CD8-positive, alpha-beta T cell (primary cell): ENCODE measurements at regions of chr20 and their contacts with region 1.

Region 1: GRCh38 chr20:63980806-63981728 is at the start of gene PRPF6:
- DNase-seq: peak; percentile 88 to 98 (median 95)
- ATAC-seq: peak; percentile 60
- H3K4me3 ChIP-seq: peak within 1 kb of the TSS; percentile 67 to 76
- H3K4me3 Mint-ChIP-seq: peak within 1 kb of the TSS; percentile 91
- H3K27ac ChIP-seq: peak within 1 kb of the TSS; percentile 85 to 91
- H3K27ac Mint-ChIP-seq: peak within 1 kb of the TSS; percentile 95
- H3K4me1 ChIP-seq: peaks cover 52% of the 10 kb centered on the region
- H3K4me1 Mint-ChIP-seq: peaks cover 66% of the 10 kb centered on the region
- H3K27me3 ChIP-seq: no peaks in the 10 kb centered on the region
- H3K27me3 Mint-ChIP-seq: no peaks in the 10 kb centered on the region
- CTCF ChIP-seq: peak; percentile 78
- total RNA-seq, gene PRPF6: 51.6 to 51.9 TPM

Region 2: DNA sequence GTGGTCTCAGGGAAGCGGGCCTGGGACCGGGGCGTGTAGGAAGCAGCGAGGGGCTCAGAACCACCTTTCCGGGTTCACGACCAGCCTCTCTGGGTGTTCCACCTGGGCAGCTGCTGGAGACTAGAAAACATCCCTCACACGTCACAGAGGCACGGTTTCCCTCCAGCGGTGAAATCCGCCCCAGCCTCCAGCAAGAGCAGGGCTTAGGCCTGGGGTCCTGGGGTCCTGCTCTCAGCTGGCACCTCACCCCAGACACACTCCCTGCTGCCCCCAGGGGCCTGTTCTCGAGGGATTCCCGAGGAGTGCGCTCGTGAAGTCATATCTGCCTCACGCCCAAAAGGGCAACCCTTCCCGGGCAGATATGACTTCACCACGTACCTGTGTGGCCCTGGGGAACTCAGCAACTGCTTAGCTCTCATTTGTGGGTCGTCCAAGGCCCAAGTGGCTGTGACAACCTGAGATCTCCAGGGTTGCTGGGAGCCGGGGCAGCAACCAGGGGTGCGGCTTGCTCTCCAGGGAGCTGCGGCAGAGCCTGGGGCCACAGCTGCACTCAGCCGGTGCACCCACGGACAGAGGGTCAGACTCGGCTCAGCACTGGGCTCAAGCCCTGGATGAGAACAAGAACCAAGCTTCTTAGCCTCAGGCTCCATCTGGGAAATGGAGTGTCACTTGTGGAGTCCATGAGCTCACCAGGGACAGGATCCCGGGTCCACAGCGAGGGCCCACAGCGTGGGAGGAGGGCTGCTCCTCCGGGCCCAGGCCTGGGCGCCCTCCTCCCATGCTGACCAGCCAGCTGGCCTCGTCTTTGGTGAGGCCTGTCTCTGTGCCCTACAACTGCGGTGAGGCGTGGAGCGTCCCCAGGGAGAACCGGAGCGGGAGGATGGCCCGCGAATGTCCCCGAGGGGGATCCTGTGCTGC is 426.4 kb before region 1 on chr20:
- CTCF ChIA-PET with region 1: no interaction called
- POLR2A ChIA-PET with region 1: no interaction called
- intact Hi-C with region 1: no loop called
- DNase-seq: peak in 2 of 9 experiments; percentile 37 to 57
- ATAC-seq: no peak
- H3K4me3 ChIP-seq: peak overlapping the region; percentile 51 to 55
- H3K4me3 Mint-ChIP-seq: peak overlapping the region; percentile 80
- H3K27ac ChIP-seq: no peak overlapping the region
- H3K27ac Mint-ChIP-seq: peak overlapping the region; percentile 84
- H3K4me1 ChIP-seq: peaks cover 15% of the 10 kb centered on the region
- H3K4me1 Mint-ChIP-seq: peaks cover 17% of the 10 kb centered on the region
- H3K27me3 ChIP-seq: no peaks in the 10 kb centered on the region
- H3K27me3 Mint-ChIP-seq: no peaks in the 10 kb centered on the region
- CTCF ChIP-seq: no peak

Region 3: DNA sequence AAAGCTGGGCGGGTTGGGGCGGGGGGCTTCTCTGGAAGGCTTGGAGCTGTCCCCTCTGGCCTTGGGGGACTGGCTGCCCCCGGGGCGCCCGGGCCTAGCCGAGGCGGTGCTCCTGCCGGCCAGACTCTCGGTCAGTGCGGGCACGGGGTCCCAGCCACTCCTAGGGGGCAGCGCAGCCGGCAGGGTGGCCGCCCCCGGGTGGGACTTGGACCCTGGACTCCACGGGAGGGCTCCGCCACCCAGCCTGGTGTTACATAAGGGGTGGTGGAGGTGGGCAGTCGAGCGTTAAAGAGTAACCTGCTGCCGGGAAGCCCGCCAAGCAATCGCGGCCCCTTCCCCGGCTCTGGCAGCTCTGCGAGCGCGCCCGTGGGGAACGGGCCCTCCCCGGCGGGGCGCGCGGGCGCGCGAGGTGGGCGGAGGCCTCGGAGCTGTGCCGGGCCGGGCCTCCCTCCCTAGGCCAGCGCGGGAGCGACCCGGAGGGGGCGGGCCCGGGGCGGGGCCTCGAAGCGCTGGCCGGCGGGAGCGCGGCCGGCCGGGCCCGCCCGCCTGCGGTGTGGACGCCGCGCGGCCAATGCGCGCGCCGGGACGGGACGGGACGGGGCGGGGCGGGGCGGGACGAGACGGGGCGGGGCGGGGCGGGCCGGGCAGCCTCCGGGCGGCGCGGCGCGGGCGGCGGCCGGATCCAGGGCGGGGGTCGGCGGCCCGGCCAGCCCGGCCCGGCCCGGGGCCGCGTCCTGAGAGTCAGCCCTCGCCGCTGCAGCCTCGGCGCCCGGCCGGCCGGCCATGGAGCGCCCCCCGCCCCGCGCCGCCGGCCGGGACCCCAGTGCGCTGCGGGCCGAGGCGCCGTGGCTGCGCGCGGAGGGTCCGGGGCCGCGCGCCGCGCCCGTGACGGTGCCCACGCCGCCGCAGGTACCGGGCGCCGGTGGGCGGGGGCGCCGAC is 241.7 kb before region 1 on chr20 and contains the start of gene SLC2A4RG:
- CTCF ChIA-PET with region 1: interaction called, 3 read pairs
- POLR2A ChIA-PET with region 1: interaction called, 4 read pairs
- intact Hi-C with region 1: loop called in 1 of 2 experiments (anchors 2 kb)
- DNase-seq: peak; percentile 37 to 88 (median 66)
- ATAC-seq: peak; percentile 17
- H3K4me3 ChIP-seq: peak within 1 kb of the TSS; percentile 80 to 94
- H3K4me3 Mint-ChIP-seq: peak within 1 kb of the TSS; percentile 92
- H3K27ac ChIP-seq: peak within 1 kb of the TSS; percentile 40 to 48
- H3K27ac Mint-ChIP-seq: no peak within 1 kb of the TSS
- H3K4me1 ChIP-seq: peaks cover 41% of the 10 kb centered on the region
- H3K4me1 Mint-ChIP-seq: peaks cover 16% of the 10 kb centered on the region
- H3K27me3 ChIP-seq: no peaks in the 10 kb centered on the region
- H3K27me3 Mint-ChIP-seq: no peaks in the 10 kb centered on the region
- CTCF ChIP-seq: no peak
- total RNA-seq, gene SLC2A4RG: 79.3 to 90.0 TPM

Region 4: DNA sequence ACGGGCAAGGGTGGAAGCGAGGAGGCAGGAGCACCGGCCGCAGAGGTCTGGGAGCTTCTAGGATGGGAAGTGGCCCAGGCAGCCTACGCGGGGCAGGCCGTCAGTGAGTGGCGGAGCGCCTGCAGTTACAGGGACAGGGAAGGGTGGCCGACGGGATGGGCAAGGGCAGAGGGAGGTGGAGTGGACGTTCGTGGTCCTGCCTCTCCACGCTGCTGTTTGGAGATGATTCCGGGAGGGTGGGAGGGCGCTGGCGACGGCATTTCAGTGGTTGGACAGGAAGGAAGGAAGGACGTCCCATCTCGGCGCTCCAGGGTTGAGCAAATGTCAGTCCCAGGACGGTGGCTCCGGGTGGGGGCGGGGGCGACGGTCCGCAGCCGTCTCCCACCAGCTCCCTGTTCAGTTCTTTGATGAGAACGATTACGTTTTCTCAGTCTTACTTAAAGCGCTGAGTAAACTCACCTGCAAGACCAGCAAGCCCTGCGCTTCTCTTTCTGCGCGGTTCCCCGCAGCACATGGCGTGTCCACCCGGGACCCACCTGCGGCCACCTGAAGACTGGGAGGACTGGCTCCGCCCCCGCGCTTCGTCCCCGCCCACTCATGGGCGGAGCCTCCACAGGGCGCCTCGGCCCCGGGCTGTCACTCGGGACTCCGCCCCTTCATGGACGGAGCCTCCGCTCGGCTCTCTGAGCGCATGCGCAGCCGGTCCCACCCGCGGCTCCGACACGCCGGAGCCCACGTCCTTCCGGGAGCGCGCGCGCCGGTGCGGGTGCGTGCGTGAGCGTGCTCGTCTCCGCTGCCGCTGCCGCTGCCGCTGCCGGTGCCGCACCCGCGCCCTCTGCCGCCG is 86.5 kb before region 1 on chr20 and contains the start of gene DNAJC5:
- CTCF ChIA-PET with region 1: interaction called, 4 read pairs
- POLR2A ChIA-PET with region 1: no interaction called
- intact Hi-C with region 1: loop called in 1 of 2 experiments (anchors 5 kb)
- DNase-seq: peak; percentile 93 to 99 (median 97)
- ATAC-seq: peak; percentile 92
- H3K4me3 ChIP-seq: peak within 1 kb of the TSS; percentile 46 to 66
- H3K4me3 Mint-ChIP-seq: peak within 1 kb of the TSS; percentile 95
- H3K27ac ChIP-seq: peak within 1 kb of the TSS; percentile 55 to 65
- H3K27ac Mint-ChIP-seq: peak within 1 kb of the TSS; percentile 96
- H3K4me1 ChIP-seq: peaks cover 41% of the 10 kb centered on the region
- H3K4me1 Mint-ChIP-seq: peaks cover 44% of the 10 kb centered on the region
- H3K27me3 ChIP-seq: no peaks in the 10 kb centered on the region
- H3K27me3 Mint-ChIP-seq: no peaks in the 10 kb centered on the region
- CTCF ChIP-seq: no peak
- total RNA-seq, gene DNAJC5: 24.3 TPM

Region 5: DNA sequence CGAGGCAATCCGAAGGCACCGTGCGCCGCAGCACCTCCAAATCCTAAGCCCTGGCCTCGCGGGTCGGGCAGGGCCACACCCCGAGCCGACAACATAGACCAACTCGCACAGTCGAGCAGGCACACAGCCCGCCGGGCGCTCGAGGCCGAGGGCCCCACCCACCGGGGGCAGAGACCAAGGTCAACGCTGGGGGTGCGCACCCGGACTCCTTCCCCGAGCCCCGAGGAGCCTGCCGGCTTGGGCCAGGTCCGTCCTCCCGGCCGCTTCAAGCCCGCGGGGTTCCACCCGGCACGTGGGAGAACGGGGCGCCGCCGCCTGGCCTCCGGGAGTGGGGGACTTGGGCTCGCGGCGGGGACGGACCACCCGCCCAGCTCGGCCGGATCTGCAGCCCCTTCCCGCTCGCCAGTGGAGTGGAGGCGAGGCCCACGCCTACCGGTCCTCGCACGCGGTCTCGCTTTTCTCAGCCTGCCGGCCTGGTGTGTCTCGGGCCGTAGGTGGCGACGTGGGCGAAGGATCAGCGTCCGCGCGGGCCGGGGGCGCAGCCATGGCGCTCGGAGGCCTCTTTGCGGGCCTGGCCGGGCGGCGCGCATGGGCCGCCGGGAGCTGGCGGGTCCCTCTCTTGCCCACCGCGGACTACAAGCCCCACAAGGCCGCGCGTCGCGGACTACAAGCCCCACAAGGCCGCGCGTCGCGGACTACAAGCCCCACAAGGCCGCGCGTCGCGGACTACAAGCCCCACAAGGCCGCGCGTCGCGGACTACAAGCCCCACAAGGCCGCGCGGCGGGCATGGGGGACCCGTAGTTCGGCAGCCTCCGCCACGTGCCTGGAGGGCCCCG is 25.0 kb before region 1 on chr20 and contains the start of gene UCKL1:
- CTCF ChIA-PET with region 1: interaction called, 4 read pairs
- POLR2A ChIA-PET with region 1: interaction called, 18 read pairs
- intact Hi-C with region 1: loop called (anchors 1 kb)
- DNase-seq: peak; percentile 78 to 93 (median 89)
- ATAC-seq: peak; percentile 81
- H3K4me3 ChIP-seq: peak within 1 kb of the TSS; percentile 73 to 95
- H3K4me3 Mint-ChIP-seq: peak within 1 kb of the TSS; percentile 82
- H3K27ac ChIP-seq: peak within 1 kb of the TSS; percentile 64 to 77
- H3K27ac Mint-ChIP-seq: peak within 1 kb of the TSS; percentile 76
- H3K4me1 ChIP-seq: peaks cover 28% of the 10 kb centered on the region
- H3K4me1 Mint-ChIP-seq: peaks cover 34% of the 10 kb centered on the region
- H3K27me3 ChIP-seq: no peaks in the 10 kb centered on the region
- H3K27me3 Mint-ChIP-seq: no peaks in the 10 kb centered on the region
- CTCF ChIP-seq: no peak
- total RNA-seq, gene UCKL1: 29.6 to 33.7 TPM

Region 6: GRCh38 chr20:64038565-64039292 is 57.7 kb after region 1 on chr20:
- CTCF ChIA-PET with region 1: interaction called, 26 read pairs
- POLR2A ChIA-PET with region 1: interaction called, 12 read pairs
- intact Hi-C with region 1: loop called (anchors 1 to 2 kb)
- DNase-seq: peak; percentile 57 to 91 (median 78)
- ATAC-seq: peak; percentile 78
- H3K4me3 ChIP-seq: peak overlapping the region; percentile 45 to 76
- H3K4me3 Mint-ChIP-seq: peak overlapping the region; percentile 78
- H3K27ac ChIP-seq: peak overlapping the region in 1 of 2 experiments; percentile 45
- H3K27ac Mint-ChIP-seq: no peak overlapping the region
- H3K4me1 ChIP-seq: peaks cover 75% of the 10 kb centered on the region
- H3K4me1 Mint-ChIP-seq: peaks cover 39% of the 10 kb centered on the region
- H3K27me3 ChIP-seq: peaks cover 0 to 3% of the 10 kb centered on the region in 2 experiments
- H3K27me3 Mint-ChIP-seq: no peaks in the 10 kb centered on the region
- CTCF ChIP-seq: peak; percentile 67

Region 7: DNA sequence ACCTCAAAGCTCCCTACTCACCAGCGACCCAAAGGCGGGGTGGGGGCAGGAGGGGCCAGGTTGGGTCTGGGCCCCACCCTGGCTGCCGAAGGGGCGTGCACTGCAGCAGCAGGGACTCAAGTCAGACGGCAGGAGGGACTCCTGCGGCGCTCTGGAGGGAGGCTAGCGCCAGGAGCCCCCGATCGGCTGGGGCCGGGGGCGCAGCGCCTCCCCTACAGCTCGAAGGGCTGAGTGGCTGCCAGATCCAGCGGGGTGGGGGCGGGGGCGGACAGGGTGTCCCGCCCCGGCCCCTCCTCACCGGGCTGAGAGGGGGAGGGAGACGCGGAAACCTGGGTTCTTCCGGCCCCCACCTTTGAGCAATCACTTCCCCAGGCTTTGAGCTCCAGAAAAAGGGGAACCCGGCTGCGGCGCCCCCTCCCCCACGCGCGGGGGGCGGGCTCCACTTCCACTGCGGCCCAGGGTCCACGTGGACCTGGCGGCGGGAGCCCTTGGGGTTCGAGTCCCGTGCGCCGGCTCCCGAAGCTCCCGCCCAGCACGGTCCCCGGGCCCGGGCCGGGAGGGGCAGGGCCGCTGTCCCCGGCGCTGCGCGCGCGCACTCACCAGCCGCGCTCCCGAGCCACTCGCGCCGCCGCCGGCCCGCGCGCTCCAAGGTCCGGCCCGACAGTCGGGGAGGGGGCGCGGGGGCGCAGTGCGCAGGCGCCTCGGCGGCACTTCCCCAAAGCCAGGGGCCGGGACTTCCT is 98.4 kb after region 1 on chr20 and contains the start of gene RGS19:
- CTCF ChIA-PET with region 1: interaction called, 10 read pairs
- POLR2A ChIA-PET with region 1: interaction called, 4 read pairs
- intact Hi-C with region 1: loop called in 1 of 2 experiments (anchors 1 kb)
- DNase-seq: peak in 8 of 9 experiments; percentile 50 to 85 (median 69)
- ATAC-seq: peak; percentile 32
- H3K4me3 ChIP-seq: peak within 1 kb of the TSS; percentile 85 to 95
- H3K4me3 Mint-ChIP-seq: peak within 1 kb of the TSS; percentile 87
- H3K27ac ChIP-seq: peak within 1 kb of the TSS; percentile 66 to 77
- H3K27ac Mint-ChIP-seq: peak within 1 kb of the TSS; percentile 90
- H3K4me1 ChIP-seq: peaks cover 57% of the 10 kb centered on the region
- H3K4me1 Mint-ChIP-seq: peaks cover 39% of the 10 kb centered on the region
- H3K27me3 ChIP-seq: peaks cover 0 to 1% of the 10 kb centered on the region in 2 experiments
- H3K27me3 Mint-ChIP-seq: peaks cover 2% of the 10 kb centered on the region
- CTCF ChIP-seq: no peak
- total RNA-seq, gene RGS19: 6.9 to 8.1 TPM